Head of caudate nucleus (tissue), 42 donors: ENCODE measurements at regions of chr9 and their contacts with region 1.

Region 1: GRCh38 chr9:27539479-27540441 is 10.1 kb upstream of the MOB3B start:
- DNase-seq: peak in 2 of 42 donors; percentile 2 to 57

Region 2: DNA sequence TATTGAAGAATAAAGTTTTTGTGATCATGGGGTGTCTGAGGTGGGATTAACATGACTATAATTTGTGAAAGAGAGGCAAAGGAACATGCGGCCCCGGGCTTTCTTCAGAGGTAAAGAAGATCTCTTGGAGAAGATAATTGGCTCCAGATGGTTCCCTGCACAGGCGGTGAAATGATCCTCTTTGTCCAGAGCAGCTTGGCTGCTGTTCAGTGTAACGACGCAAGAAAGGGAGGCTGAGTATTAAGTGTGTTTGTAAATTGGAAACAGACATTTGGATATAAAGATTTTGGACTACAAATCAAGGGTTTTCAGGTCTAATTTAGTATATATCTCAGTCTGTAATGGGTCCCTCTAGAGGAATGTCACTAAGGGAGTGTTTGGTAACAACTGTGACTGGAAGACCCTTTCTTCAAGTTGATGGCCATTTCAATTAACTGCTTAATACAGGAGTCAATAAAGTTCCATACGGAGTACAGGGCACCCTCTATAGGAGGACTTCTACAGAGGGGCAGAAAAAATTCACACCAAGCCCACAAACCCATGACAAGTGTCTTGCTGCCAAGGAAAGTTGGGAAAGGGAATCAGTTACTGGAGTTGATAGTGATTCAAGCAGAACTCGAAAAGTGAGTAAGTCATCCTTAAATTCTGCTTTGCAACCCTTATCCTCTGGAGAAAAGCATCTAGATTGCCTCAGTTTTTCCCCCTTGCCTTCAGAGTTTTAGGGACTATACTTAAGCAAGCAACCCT is 246.9 kb before region 1 on chr9:
- intact Hi-C with region 1: loop called (anchors 5 kb)
- DNase-seq: no peak

Region 3: DNA sequence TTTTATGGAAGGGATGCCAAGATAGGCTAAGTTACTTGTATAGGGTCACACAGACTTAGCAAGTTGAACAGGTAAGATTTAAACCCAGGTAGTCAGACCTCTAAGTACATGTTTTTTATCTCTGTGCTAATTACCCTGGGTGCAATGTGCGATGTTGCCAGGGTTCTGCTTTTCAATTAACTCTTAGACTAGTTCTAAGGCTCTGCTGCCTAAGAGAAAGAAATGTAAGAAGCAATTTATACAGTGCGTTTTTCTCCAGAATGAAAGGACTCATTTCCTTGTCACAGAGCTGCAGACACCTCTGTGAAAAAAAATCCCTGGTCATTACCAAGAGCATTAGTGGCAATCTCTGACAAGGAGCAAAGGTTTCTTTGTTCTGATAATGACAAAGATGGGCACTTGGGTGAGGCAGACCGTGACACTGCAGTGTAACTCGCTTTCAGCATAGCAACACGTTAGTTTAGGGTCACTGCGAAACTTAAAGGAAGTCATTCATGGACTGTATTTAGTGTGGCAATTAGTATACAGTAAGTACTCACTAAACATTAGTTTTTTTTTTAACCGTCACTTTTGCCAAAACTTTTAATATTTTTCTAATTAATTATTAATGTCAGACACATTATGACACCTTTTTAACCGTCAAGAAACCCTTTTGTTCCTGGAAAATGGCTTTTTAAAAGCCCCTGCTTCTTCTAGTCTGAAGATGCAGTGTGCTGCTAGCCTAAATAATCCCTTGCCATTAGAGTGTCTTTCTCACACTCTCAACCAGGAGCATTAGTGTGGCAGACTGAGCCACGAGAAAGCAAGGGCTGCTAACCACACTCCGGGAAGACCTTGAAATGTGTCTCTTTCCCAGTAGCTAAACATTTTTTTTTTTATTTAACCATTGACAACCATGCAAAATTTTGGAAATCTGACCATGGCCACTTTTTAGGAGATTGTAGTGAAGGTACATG is 553.5 kb after region 1 on chr9:
- intact Hi-C with region 1: no loop called
- DNase-seq: no peak